ENCODE measurements at regions of chr1 and their contacts with region 1.

Region 1: DNA sequence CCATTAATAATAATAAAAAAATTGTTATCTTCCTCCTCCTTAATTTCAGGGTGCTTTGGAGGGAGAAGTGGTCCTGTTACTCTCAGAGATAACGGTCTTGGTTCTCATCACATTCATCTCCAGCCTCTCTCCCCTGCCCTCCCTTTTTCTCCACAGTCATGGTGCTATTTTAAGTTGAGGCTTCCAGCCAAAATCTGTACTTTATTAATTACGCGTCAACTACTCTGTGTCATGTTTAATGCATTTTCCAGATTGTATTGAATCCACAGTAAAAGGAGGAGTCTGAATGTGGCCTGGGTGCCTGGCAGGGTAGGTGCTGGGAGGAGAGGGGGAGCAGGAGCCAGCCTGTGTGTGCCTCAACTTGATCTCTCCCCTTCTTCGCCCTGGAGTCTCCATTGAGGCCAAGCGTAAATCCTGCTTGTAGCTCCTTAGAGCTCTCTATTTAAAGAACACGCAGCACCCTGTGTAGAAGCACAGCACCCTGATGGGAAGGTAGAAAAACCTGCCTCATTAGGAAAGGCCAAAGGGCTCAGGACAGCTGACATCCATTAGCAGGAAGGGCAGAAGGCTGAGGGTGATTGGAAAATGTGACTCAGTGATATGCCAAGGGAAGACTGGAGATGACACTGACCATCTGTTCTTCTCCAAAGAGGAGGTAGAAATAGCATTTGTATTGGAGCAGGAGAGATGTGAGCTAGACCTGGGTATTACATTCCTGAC is 82.4 kb downstream of the PLXNA2 start:
- DNase-seq: no peak

Region 2: DNA sequence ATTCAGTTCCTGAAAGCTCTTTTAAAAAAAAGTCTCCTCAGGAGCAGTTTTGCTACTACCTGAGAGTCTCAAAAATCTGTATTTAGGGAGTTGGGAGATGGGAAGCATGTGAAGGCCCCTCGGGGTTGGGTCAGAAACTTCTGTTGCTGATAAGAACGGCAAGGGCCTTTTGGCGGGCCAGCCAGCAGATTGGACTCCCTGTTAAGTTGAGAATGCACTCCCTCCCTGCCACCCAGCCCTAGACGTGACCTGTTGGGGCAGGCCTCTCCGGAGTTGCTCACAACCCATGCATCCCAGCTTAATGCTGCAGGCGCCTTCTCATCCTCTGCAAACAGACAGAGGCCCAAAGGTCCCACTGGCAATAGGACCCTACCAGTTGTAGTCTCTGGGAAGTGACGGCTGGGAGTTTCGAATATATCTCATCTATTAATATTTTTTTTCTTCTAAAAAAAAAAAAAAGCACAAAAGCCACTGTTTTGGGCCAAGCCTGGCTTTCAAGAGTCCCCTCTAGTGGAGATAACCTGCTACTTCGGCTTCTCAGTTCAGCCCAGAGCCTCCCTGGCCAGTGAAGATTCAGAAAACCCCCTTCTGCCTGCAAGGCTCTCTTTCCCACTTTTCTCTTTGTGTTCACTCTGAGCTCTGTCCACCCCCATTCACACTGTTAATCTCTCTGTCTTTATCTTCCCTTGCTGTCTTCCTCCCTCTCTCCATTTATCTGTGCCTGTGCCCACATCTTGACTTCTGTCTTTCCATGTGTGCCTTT is 77.1 kb after region 1 on chr1:
- intact Hi-C with region 1: loop called (anchors 1 kb)
- DNase-seq: peak; percentile 75

Region 3: GRCh38 chr1:208349694-208350330 is 188.0 kb after region 1 on chr1:
- intact Hi-C with region 1: no loop called
- DNase-seq: no peak

Region 4: GRCh38 chr1:208665936-208666335 is 504.1 kb after region 1 on chr1:
- intact Hi-C with region 1: no loop called
- DNase-seq: no peak

Measured in cardiac septum (tissue), 1 donor.